Calu3 (cell line): ENCODE measurements at regions of chr11 and their contacts with region 1.

Region 1: GRCh38 chr11:115944592-115944991 is 440.4 kb upstream of the CADM1 start:
- DNase-seq: no peak
- H3K4me3 Mint-ChIP-seq: no peak overlapping the region
- H3K27ac Mint-ChIP-seq: no peak overlapping the region
- H3K4me1 Mint-ChIP-seq: no peaks in the 10 kb centered on the region
- H3K27me3 Mint-ChIP-seq: peaks cover 10% of the 10 kb centered on the region
- CTCF ChIP-seq: no peak

Region 2: GRCh38 chr11:115745610-115746512 is 198.7 kb before region 1 on chr11:
- CTCF ChIA-PET with region 1: interaction called, 13 read pairs
- intact Hi-C with region 1: no loop called
- DNase-seq: no peak
- H3K4me3 Mint-ChIP-seq: no peak overlapping the region
- H3K27ac Mint-ChIP-seq: no peak overlapping the region
- H3K4me1 Mint-ChIP-seq: no peaks in the 10 kb centered on the region
- H3K27me3 Mint-ChIP-seq: no peaks in the 10 kb centered on the region
- CTCF ChIP-seq: no peak

Region 3: DNA sequence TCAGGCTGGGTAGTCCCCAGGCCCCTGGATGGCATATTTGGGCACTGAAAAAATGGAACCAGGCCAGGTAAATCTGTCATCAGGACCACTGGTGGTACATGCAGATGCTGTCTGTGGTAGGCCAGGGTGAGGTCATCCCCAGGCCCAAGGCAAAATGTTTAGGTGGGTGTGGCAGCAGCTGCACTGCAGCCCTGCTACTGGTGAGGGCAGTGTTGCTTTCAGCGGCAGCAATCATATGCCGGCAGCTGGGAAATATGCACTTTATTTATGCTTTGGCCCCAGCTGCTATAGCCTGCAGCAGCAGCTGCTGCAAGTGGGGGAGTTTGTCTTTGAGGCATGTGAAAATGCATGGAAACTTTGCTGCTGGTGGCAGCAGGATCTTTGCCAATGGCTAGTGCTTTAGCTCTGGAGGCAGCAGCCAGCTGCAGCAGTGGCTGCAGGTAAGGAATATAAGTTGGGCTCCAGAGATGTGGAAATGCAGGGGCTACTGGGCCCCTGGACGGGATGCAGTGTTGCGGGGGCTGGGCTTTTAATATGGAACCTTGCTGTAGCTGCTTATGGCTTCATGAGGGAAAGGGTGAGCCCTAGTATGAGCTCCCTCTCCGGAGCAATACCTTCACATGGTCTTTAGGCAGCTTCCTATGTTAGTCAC is 74.7 kb before region 1 on chr11:
- CTCF ChIA-PET with region 1: no interaction called
- intact Hi-C with region 1: no loop called
- DNase-seq: no peak
- H3K4me3 Mint-ChIP-seq: no peak overlapping the region
- H3K27ac Mint-ChIP-seq: no peak overlapping the region
- H3K4me1 Mint-ChIP-seq: no peaks in the 10 kb centered on the region
- H3K27me3 Mint-ChIP-seq: no peaks in the 10 kb centered on the region
- CTCF ChIP-seq: no peak